Ascending aorta (tissue), 2 donors: ENCODE measurements at regions of chr12 and their contacts with region 1.

Region 1: DNA sequence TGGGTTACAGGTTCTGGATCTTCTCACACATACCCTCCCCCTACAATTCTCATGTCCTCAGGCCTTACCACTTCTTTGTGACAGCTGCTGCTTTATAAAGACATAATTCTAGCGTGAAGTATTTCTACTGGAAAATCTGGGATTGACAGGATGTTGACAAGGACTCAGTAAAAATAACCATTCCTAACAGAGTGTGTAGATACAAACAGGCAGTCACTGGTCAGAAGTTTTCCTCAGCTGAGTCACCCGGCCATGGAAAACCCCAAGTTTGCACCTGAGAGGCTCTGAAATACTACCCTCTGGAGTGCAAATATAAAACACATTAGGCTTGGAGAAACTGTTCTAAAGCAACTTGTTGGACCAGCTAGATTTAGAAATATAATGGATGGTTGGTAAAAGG is 54.4 kb downstream of the SPPL3 start:
- DNase-seq: no peak
- H3K4me3 ChIP-seq: no peak overlapping the region
- H3K27ac ChIP-seq: peak overlapping the region; percentile 63 to 71
- H3K4me1 ChIP-seq: peaks cover 12 to 60% of the 10 kb centered on the region in 2 donors
- H3K27me3 ChIP-seq: no peaks in the 10 kb centered on the region
- CTCF ChIP-seq: peak in 1 of 3 experiments; percentile 12

Region 2: GRCh38 chr12:120886199-120887018 is 36.6 kb after region 1 on chr12:
- intact Hi-C with region 1: no loop called
- DNase-seq: no peak
- H3K4me3 ChIP-seq: no peak overlapping the region
- H3K27ac ChIP-seq: no peak overlapping the region
- H3K4me1 ChIP-seq: peaks cover 0 to 8% of the 10 kb centered on the region in 2 donors
- H3K27me3 ChIP-seq: no peaks in the 10 kb centered on the region
- CTCF ChIP-seq: no peak

Region 3: GRCh38 chr12:120904197-120904773 is 54.5 kb after region 1 on chr12 and contains the start of gene SPPL3:
- intact Hi-C with region 1: loop called (anchors 5 kb)
- DNase-seq: peak; percentile 62 to 94
- H3K4me3 ChIP-seq: peak within 1 kb of the TSS; percentile 91 to 97
- H3K27ac ChIP-seq: peak within 1 kb of the TSS; percentile 83 to 93
- H3K4me1 ChIP-seq: peaks cover 12 to 30% of the 10 kb centered on the region in 2 donors
- H3K27me3 ChIP-seq: no peaks in the 10 kb centered on the region
- CTCF ChIP-seq: no peak
- total RNA-seq, gene SPPL3: 20.4 TPM

Region 4: DNA sequence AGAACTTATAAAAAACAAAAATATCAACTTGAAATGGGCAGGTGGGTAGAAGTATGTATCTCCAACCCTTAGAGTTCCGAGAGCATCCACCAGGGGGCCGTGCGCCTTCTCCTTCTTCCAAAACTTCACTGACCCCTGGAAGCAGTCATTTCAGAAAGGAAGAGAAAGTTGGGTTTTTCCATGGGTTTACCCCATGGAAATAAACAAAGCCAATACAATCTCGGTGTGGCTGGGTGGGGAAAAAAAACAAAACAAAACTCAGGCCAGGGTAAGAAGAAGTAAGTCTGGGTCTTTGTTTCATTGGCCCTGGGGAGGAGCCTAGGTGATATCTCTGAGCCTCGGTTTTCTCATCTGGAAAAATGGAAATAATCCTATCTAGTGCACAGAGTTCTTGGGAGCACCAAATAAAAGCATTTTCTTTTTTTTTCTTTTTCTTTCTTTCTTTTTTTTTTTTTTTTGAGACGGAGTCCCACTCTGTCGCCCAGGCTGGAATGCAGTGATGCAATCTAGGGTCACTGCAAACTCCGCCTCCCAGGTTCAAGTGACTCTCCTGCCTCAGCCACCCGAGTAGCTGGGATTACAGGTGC is 95.0 kb after region 1 on chr12:
- intact Hi-C with region 1: no loop called
- DNase-seq: peak in 1 of 2 donors; percentile 67
- H3K4me3 ChIP-seq: no peak overlapping the region
- H3K27ac ChIP-seq: no peak overlapping the region
- H3K4me1 ChIP-seq: no peaks in the 10 kb centered on the region
- H3K27me3 ChIP-seq: no peaks in the 10 kb centered on the region
- CTCF ChIP-seq: peak; percentile 35 to 56 (median 43)

Region 5: GRCh38 chr12:121033625-121034349 is 184.0 kb after region 1 on chr12:
- intact Hi-C with region 1: no loop called
- DNase-seq: no peak
- H3K4me3 ChIP-seq: no peak overlapping the region
- H3K27ac ChIP-seq: no peak overlapping the region
- H3K4me1 ChIP-seq: no peaks in the 10 kb centered on the region
- H3K27me3 ChIP-seq: no peaks in the 10 kb centered on the region
- CTCF ChIP-seq: no peak